GM10248 (cell line): ENCODE measurements at regions of chr4 and their contacts with region 1.

Region 1: GRCh38 chr4:94406668-94407437 is 44.9 kb upstream of the PDLIM5 start:
- DNase-seq: peak; percentile 33
- CTCF ChIP-seq: peak; percentile 68

Region 2: GRCh38 chr4:94390804-94391410 is 15.9 kb before region 1 on chr4:
- CTCF ChIA-PET with region 1: interaction called, 16 read pairs
- POLR2A ChIA-PET with region 1: no interaction called
- DNase-seq: peak; percentile 20
- CTCF ChIP-seq: peak; percentile 52

Region 3: GRCh38 chr4:94419956-94420355 is 13.1 kb after region 1 on chr4:
- CTCF ChIA-PET with region 1: interaction called, 21 read pairs
- POLR2A ChIA-PET with region 1: no interaction called
- DNase-seq: no peak
- CTCF ChIP-seq: no peak

Region 4: DNA sequence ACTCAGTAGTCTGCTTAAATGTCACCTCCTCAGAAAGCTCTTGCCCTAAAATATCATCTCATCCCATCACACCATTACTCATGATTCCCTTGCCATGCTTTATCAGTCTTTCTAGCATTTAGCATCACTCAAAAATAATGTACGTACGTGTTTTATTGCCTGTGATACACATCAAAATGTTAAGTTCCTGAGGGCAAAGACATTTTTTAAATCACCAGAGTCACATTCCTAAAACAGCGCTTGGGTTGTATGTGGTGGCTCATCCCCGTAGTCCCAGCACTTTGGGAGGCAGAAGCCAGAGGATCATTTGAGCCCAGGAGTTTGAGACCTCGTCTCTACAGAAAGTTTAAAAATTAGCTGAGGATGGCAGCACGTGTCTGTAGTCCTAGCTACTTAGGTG is 23.6 kb after region 1 on chr4:
- CTCF ChIA-PET with region 1: interaction called, 14 read pairs
- POLR2A ChIA-PET with region 1: no interaction called
- DNase-seq: no peak
- CTCF ChIP-seq: no peak

Region 5: DNA sequence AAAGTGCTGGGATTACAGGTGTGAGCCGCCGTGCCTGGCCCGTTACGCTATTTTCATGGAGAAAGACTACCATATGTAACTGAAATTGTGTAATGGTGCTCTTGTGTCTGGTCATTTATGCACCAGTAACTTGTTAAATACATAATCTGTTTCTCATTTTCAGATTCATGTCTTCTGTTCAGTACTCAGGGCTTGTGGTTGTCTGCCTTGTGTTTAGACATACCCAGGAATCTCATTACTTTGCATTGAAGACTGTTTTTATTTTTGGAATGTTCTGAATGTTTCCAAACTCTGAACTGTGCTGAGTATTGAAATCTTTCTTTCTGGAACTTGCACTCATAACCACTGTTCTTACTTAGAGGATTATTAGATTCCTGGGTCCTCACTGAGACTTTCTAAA is 97.7 kb after region 1 on chr4:
- CTCF ChIA-PET with region 1: no interaction called
- POLR2A ChIA-PET with region 1: no interaction called
- DNase-seq: no peak
- CTCF ChIP-seq: no peak

Region 6: DNA sequence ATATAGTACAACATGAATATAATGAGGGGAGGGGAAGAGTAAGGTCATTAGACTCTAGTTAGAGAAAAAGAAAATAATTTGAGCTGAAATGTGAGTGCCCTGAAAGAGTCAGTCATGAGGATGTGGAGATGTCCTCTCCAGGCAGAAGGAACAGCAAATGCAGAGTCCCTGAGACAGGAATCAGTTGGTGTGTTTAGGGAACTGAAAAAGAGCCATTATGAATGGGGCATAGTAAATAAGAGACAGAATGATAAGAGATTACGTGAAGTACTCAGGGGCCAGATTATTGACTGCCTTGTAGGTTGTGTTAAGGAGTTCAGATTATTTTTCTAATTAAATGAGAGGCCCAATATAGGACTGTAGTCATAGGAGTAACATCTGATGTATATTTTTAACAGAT is 191.9 kb after region 1 on chr4:
- CTCF ChIA-PET with region 1: interaction called, 21 read pairs
- POLR2A ChIA-PET with region 1: no interaction called
- DNase-seq: no peak
- CTCF ChIP-seq: no peak